ENCODE measurements at regions of chr11 and their contacts with region 1.

Region 1: DNA sequence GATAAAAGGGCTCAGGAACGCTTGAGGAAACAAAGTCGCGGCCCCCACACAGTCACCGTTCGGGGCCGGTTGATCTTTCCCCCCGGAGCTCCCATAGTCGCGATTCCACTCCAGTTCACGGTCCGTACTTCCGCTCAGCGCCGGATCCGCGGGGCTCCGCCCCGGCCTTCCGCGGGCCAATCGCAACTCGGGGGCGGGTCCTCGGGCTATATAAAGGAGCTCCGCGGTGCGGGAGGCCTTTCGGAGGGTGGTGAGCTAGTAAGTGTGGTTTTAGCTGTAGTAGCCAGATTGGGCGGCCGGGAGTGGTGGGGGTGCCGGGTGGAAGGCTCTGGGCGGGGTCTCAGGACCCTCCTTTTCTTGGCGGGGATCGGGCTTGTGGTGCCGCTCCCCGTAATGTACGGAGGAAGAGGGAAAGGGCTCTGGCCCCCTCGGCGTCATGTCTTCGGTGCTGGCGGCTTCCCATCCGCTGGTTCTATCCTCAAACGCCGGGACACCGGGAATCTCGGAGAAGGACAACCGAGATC is at the starts of genes C11orf98 and CSKMT:
- DNase-seq: peak; percentile 95 to 99
- H3K4me3 ChIP-seq: peak within 1 kb of the TSS; percentile 50
- H3K4me3 Mint-ChIP-seq: peak within 1 kb of the TSS; percentile 99
- H3K27ac Mint-ChIP-seq: peak within 1 kb of the TSS; percentile 97
- H3K4me1 ChIP-seq: peaks cover 15% of the 10 kb centered on the region
- H3K4me1 Mint-ChIP-seq: peaks cover 5% of the 10 kb centered on the region
- H3K27me3 ChIP-seq: no peaks in the 10 kb centered on the region
- H3K27me3 Mint-ChIP-seq: no peaks in the 10 kb centered on the region
- CTCF ChIP-seq: no peak
- total RNA-seq, gene C11orf98: 115 and 123 TPM in 2 replicates
- total RNA-seq, gene CSKMT: 38.2 and 40.1 TPM in 2 replicates

Region 2: DNA sequence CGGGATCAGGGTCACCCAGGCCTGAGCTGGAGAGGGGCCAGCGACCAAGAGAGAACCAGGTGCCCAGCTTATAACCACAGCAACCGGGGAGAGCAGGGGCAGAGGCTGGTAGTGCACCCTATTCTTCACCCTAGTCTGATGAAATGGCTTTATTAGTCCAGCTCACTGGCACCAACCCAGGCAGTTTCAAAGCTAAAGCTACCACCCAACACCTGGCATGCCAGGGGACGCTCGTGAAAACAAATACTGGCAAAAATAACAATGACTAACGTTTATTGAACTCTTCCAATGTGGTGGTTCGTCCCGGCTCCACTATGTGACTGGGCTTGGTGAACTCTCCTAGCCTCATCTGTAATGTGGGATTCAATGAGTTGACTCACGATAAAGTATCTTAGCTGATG is 215.7 kb before region 1 on chr11:
- CTCF ChIA-PET with region 1: no interaction called
- POLR2A ChIA-PET with region 1: no interaction called
- intact Hi-C with region 1: no loop called
- DNase-seq: no peak
- H3K4me3 ChIP-seq: no peak overlapping the region
- H3K4me3 Mint-ChIP-seq: no peak overlapping the region
- H3K27ac Mint-ChIP-seq: no peak overlapping the region
- H3K4me1 ChIP-seq: peaks cover 9% of the 10 kb centered on the region
- H3K4me1 Mint-ChIP-seq: peaks cover 14% of the 10 kb centered on the region
- H3K27me3 ChIP-seq: no peaks in the 10 kb centered on the region
- H3K27me3 Mint-ChIP-seq: no peaks in the 10 kb centered on the region
- CTCF ChIP-seq: no peak

Region 3: DNA sequence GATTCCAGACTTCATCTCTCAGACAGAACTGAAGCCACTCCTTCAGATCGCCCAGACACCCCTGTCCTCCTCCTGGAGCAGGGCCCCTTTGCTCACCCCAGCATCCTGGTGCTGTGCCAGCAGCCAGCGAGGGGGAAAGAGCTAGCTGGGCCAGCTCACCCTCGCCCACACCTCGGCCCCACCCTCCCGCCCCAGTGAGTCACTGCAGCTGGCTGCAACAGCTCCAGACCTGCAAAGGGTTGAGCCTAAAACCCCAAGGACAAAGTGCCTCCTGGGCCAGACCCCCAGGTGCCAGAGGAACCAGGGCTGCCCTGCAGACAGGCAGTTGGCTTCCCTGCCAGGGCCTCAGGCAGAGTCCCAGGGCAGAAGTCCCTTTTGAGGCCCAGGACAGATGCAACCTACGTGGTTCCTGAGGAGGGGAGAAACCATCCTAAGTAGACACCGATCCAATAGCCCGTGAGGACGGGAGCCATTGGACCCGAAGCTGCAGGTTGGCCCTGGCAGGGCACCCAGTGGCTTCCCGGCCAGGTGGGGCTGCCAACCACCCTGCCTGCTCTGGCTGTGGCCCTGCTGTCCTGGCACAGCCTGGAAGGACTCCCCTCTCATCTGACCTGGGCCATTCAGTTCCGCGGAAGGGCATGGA is 125.8 kb before region 1 on chr11:
- CTCF ChIA-PET with region 1: no interaction called
- POLR2A ChIA-PET with region 1: no interaction called
- intact Hi-C with region 1: no loop called
- DNase-seq: no peak
- H3K4me3 ChIP-seq: no peak overlapping the region
- H3K4me3 Mint-ChIP-seq: no peak overlapping the region
- H3K27ac Mint-ChIP-seq: no peak overlapping the region
- H3K4me1 ChIP-seq: peaks cover 46% of the 10 kb centered on the region
- H3K4me1 Mint-ChIP-seq: peaks cover 38% of the 10 kb centered on the region
- H3K27me3 ChIP-seq: no peaks in the 10 kb centered on the region
- H3K27me3 Mint-ChIP-seq: no peaks in the 10 kb centered on the region
- CTCF ChIP-seq: no peak

Region 4: GRCh38 chr11:62573592-62574362 is 91.4 kb before region 1 on chr11 and contains the start of gene EEF1G:
- CTCF ChIA-PET with region 1: interaction called, 4 read pairs
- POLR2A ChIA-PET with region 1: interaction called, 30 read pairs
- intact Hi-C with region 1: no loop called
- DNase-seq: peak; percentile 100
- H3K4me3 ChIP-seq: peak within 1 kb of the TSS; percentile 62
- H3K4me3 Mint-ChIP-seq: peak within 1 kb of the TSS; percentile 97
- H3K27ac Mint-ChIP-seq: peak within 1 kb of the TSS; percentile 100
- H3K4me1 ChIP-seq: peaks cover 25% of the 10 kb centered on the region
- H3K4me1 Mint-ChIP-seq: peaks cover 56% of the 10 kb centered on the region
- H3K27me3 ChIP-seq: no peaks in the 10 kb centered on the region
- H3K27me3 Mint-ChIP-seq: no peaks in the 10 kb centered on the region
- CTCF ChIP-seq: no peak
- total RNA-seq, gene EEF1G: 2,004 and 2,035 TPM in 2 replicates

Region 5: GRCh38 chr11:62612366-62613290 is 52.5 kb before region 1 on chr11 and contains the starts of genes EML3 and ROM1:
- CTCF ChIA-PET with region 1: interaction called, 12 read pairs
- POLR2A ChIA-PET with region 1: interaction called, 8 read pairs
- intact Hi-C with region 1: no loop called
- DNase-seq: peak; percentile 93
- H3K4me3 ChIP-seq: peak within 1 kb of the TSS; percentile 87
- H3K4me3 Mint-ChIP-seq: peak within 1 kb of the TSS; percentile 97
- H3K27ac Mint-ChIP-seq: peak within 1 kb of the TSS; percentile 93
- H3K4me1 ChIP-seq: peaks cover 30% of the 10 kb centered on the region
- H3K4me1 Mint-ChIP-seq: peaks cover 33% of the 10 kb centered on the region
- H3K27me3 ChIP-seq: no peaks in the 10 kb centered on the region
- H3K27me3 Mint-ChIP-seq: no peaks in the 10 kb centered on the region
- CTCF ChIP-seq: peak; percentile 99
- total RNA-seq, gene EML3: 61.2 and 68.7 TPM in 2 replicates
- total RNA-seq, gene ROM1: 1.1 and 1.3 TPM in 2 replicates

Region 6: GRCh38 chr11:62645956-62646824 is 18.9 kb before region 1 on chr11 and contains the start of gene GANAB:
- CTCF ChIA-PET with region 1: interaction called, 4 read pairs
- POLR2A ChIA-PET with region 1: interaction called, 43 read pairs
- intact Hi-C with region 1: loop called (anchors 2 kb)
- DNase-seq: peak; percentile 99
- H3K4me3 ChIP-seq: peak within 1 kb of the TSS; percentile 66
- H3K4me3 Mint-ChIP-seq: peak within 1 kb of the TSS; percentile 91
- H3K27ac Mint-ChIP-seq: peak within 1 kb of the TSS; percentile 91
- H3K4me1 ChIP-seq: peaks cover 17% of the 10 kb centered on the region
- H3K4me1 Mint-ChIP-seq: no peaks in the 10 kb centered on the region
- H3K27me3 ChIP-seq: no peaks in the 10 kb centered on the region
- H3K27me3 Mint-ChIP-seq: no peaks in the 10 kb centered on the region
- CTCF ChIP-seq: no peak
- total RNA-seq, gene GANAB: 414 and 442 TPM in 2 replicates

Region 7: DNA sequence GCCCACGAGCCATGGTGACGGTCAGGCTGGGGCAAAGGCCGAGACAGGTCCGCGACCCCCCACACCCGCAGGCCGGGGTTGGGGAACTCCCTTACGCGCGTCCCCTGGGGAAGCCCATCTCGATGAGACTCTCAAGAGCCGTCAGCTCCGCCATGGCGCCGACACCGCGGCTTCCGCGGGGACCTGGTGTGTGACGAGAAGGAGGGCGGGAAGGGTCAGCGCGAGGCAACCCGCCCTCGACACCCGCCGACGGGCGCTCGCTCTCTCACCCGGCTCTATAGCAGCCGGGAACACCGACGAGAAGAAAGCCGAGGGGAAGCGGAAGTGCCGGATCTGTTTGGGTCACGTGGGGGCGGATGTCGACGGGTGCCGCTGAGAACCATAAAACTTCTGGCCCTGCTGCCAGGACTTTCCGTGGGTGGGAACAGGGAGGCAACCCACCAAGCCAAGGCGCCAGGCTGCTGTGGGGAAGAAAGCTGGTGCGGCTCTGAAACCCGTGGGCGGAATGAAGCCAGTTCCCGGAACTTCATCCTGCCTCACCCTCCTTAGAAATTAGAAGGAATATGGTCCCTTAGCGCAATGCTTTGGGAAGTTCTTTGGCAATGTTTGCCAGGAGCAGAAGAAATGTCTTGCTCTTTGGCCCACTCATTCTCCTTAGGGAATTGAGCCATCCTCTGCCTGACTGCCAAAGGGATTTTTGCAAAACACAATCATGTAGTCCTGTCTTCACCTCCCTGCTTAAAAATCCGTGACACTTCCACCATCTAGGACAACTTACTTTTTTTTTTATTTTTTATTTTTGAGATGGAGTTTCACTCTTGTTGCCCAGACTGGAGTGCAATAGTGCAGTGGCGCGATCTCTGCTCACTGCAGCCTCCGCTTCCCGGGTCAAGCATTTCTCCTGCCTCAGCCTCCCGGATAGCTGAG is 13.9 kb after region 1 on chr11 and contains the start of gene UBXN1:
- CTCF ChIA-PET with region 1: interaction called, 5 read pairs
- POLR2A ChIA-PET with region 1: interaction called, 10 read pairs
- intact Hi-C with region 1: no loop called
- DNase-seq: peak; percentile 87 to 88
- H3K4me3 ChIP-seq: peak within 1 kb of the TSS; percentile 95
- H3K4me3 Mint-ChIP-seq: peak within 1 kb of the TSS; percentile 81
- H3K27ac Mint-ChIP-seq: peak within 1 kb of the TSS; percentile 91
- H3K4me1 ChIP-seq: no peaks in the 10 kb centered on the region; the same call in 1 of the 2 replicates
- H3K4me1 Mint-ChIP-seq: peaks cover 15% of the 10 kb centered on the region
- H3K27me3 ChIP-seq: no peaks in the 10 kb centered on the region
- H3K27me3 Mint-ChIP-seq: no peaks in the 10 kb centered on the region
- CTCF ChIP-seq: no peak
- total RNA-seq, gene UBXN1: 116 and 118 TPM in 2 replicates

Region 8: GRCh38 chr11:62753736-62754603 is 88.8 kb after region 1 on chr11 and contains the start of gene ZBTB3:
- CTCF ChIA-PET with region 1: no interaction called
- POLR2A ChIA-PET with region 1: interaction called, 25 read pairs
- intact Hi-C with region 1: no loop called
- DNase-seq: peak; percentile 98 to 99
- H3K4me3 ChIP-seq: peak within 1 kb of the TSS; percentile 56
- H3K4me3 Mint-ChIP-seq: peak within 1 kb of the TSS; percentile 97
- H3K27ac Mint-ChIP-seq: peak within 1 kb of the TSS; percentile 95
- H3K4me1 ChIP-seq: peaks cover 9% of the 10 kb centered on the region; the same call in 1 of the 2 replicates
- H3K4me1 Mint-ChIP-seq: no peaks in the 10 kb centered on the region
- H3K27me3 ChIP-seq: no peaks in the 10 kb centered on the region
- H3K27me3 Mint-ChIP-seq: no peaks in the 10 kb centered on the region
- CTCF ChIP-seq: no peak
- total RNA-seq, gene ZBTB3: 8.2 and 10.9 TPM in 2 replicates

Measured in Caco-2 (cell line).